Activated B cell treated with CpG ODN at 0.5 μM for 24 hours (primary cell): ENCODE measurements at regions of chr4 and their contacts with region 1.

Region 1: GRCh38 chr4:73258686-73259570 is at the start of gene ANKRD17:
- DNase-seq: peak; percentile 90
- ATAC-seq: peak; percentile 76
- H3K4me3 Mint-ChIP-seq: peak within 1 kb of the TSS; percentile 98
- H3K27ac Mint-ChIP-seq: peak within 1 kb of the TSS; percentile 99
- H3K4me1 Mint-ChIP-seq: peaks cover 64% of the 10 kb centered on the region
- H3K27me3 Mint-ChIP-seq: no peaks in the 10 kb centered on the region
- CTCF ChIP-seq: no peak
- total RNA-seq, gene ANKRD17: 54.1 and 61.4 TPM in 2 replicates

Region 2: DNA sequence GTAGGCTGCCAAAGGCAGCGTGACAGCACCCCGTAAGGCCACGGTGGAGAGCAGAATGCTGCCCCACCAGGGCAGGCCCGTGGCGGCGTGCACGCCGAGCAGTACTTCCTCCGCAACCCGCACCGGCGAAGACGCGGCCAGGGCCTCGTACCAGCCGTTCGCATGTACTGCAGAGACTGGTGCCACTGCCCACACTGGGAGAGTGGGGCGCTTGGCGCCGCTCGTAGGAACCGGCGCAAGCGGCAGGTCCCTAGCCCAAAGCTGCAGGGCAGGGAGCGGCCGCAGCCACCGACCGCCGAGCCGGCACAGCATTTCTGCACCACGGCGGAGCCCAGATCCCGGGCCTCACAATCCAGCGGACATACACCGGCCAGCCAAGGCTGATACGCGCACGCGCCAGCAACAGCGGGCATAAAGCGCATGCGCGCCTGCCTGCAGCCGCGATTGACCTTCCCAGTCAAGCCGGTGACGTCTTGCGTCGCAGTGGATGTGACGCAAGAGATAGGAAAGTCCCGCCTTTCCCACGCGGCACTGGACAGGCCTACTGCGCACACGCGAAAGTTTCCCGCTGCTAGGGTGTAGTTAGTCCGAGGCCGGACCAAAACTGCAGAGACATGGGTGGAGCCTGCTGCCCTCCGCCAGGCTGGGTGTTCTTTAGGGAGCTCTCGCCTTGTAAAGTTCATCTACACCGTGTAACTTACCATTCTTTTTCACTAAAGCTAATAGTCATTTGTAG is 189.4 kb before region 1 on chr4 and contains the start of gene COX18:
- CTCF ChIA-PET with region 1: interaction called, 3 read pairs
- POLR2A ChIA-PET with region 1: interaction called, 69 read pairs
- intact Hi-C with region 1: loop called (anchors 1 kb)
- DNase-seq: peak; percentile 96
- ATAC-seq: peak; percentile 80
- H3K4me3 Mint-ChIP-seq: peak within 1 kb of the TSS; percentile 89
- H3K27ac Mint-ChIP-seq: peak within 1 kb of the TSS; percentile 97
- H3K4me1 Mint-ChIP-seq: peaks cover 37% of the 10 kb centered on the region
- H3K27me3 Mint-ChIP-seq: no peaks in the 10 kb centered on the region
- CTCF ChIP-seq: no peak
- total RNA-seq, gene COX18: 12.2 and 13.5 TPM in 2 replicates

Region 3: GRCh38 chr4:73142995-73143547 is 115.9 kb before region 1 on chr4:
- CTCF ChIA-PET with region 1: interaction called, 3 read pairs
- POLR2A ChIA-PET with region 1: no interaction called
- intact Hi-C with region 1: loop called (anchors 5 kb)
- DNase-seq: no peak
- ATAC-seq: no peak
- H3K4me3 Mint-ChIP-seq: no peak overlapping the region
- H3K27ac Mint-ChIP-seq: no peak overlapping the region
- H3K4me1 Mint-ChIP-seq: no peaks in the 10 kb centered on the region
- H3K27me3 Mint-ChIP-seq: no peaks in the 10 kb centered on the region
- CTCF ChIP-seq: no peak

Region 4: GRCh38 chr4:73222466-73223257 is 36.3 kb before region 1 on chr4:
- CTCF ChIA-PET with region 1: interaction called, 4 read pairs
- POLR2A ChIA-PET with region 1: interaction called, 19 read pairs
- intact Hi-C with region 1: loop called (anchors 1 kb)
- DNase-seq: no peak
- ATAC-seq: peak; percentile 98
- H3K4me3 Mint-ChIP-seq: no peak overlapping the region
- H3K27ac Mint-ChIP-seq: no peak overlapping the region
- H3K4me1 Mint-ChIP-seq: peaks cover 37% of the 10 kb centered on the region
- H3K27me3 Mint-ChIP-seq: no peaks in the 10 kb centered on the region
- CTCF ChIP-seq: no peak

Region 5: GRCh38 chr4:73281396-73281795 is 22.5 kb after region 1 on chr4:
- CTCF ChIA-PET with region 1: no interaction called
- POLR2A ChIA-PET with region 1: no interaction called
- intact Hi-C with region 1: no loop called
- DNase-seq: no peak
- ATAC-seq: no peak
- H3K4me3 Mint-ChIP-seq: no peak overlapping the region
- H3K27ac Mint-ChIP-seq: no peak overlapping the region
- H3K4me1 Mint-ChIP-seq: no peaks in the 10 kb centered on the region
- H3K27me3 Mint-ChIP-seq: no peaks in the 10 kb centered on the region
- CTCF ChIP-seq: no peak

Region 6: GRCh38 chr4:73299548-73300280 is 40.8 kb after region 1 on chr4:
- CTCF ChIA-PET with region 1: no interaction called
- POLR2A ChIA-PET with region 1: no interaction called
- intact Hi-C with region 1: no loop called
- DNase-seq: no peak
- ATAC-seq: no peak
- H3K4me3 Mint-ChIP-seq: no peak overlapping the region
- H3K27ac Mint-ChIP-seq: no peak overlapping the region
- H3K4me1 Mint-ChIP-seq: no peaks in the 10 kb centered on the region
- H3K27me3 Mint-ChIP-seq: no peaks in the 10 kb centered on the region
- CTCF ChIP-seq: no peak

Region 7: DNA sequence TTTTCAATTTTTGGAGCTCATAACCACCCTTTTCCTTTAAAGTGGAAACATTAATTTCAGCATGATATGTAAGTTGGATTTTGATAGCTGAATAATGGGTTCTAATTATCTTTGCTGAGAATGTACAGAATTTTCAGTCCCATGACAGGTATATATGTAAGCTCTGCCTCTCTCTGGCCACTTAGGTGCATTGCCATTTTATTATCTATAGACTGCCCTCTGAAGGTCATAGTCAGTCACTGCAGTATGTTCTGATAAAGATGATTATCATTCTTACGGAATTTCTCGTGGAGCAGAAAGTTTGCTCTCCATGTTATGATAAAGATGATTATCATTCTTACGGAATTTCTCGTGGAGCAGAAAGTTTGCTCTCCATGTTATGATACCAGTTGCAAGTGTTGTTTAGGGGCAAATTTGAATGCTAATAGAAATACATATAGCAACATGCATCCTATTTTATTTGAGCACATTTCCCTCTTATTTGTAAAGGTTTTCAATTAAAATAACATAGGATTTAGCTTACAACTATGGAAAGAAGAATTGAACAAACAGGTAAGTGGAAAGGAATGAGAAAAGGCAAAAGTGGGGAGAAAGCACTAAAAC is 187.5 kb after region 1 on chr4:
- CTCF ChIA-PET with region 1: interaction called, 4 read pairs
- POLR2A ChIA-PET with region 1: no interaction called
- intact Hi-C with region 1: loop called (anchors 1 kb)
- DNase-seq: no peak
- ATAC-seq: peak; percentile 90
- H3K4me3 Mint-ChIP-seq: no peak overlapping the region
- H3K27ac Mint-ChIP-seq: no peak overlapping the region
- H3K4me1 Mint-ChIP-seq: no peaks in the 10 kb centered on the region
- H3K27me3 Mint-ChIP-seq: peaks cover 26% of the 10 kb centered on the region
- CTCF ChIP-seq: no peak

Region 8: DNA sequence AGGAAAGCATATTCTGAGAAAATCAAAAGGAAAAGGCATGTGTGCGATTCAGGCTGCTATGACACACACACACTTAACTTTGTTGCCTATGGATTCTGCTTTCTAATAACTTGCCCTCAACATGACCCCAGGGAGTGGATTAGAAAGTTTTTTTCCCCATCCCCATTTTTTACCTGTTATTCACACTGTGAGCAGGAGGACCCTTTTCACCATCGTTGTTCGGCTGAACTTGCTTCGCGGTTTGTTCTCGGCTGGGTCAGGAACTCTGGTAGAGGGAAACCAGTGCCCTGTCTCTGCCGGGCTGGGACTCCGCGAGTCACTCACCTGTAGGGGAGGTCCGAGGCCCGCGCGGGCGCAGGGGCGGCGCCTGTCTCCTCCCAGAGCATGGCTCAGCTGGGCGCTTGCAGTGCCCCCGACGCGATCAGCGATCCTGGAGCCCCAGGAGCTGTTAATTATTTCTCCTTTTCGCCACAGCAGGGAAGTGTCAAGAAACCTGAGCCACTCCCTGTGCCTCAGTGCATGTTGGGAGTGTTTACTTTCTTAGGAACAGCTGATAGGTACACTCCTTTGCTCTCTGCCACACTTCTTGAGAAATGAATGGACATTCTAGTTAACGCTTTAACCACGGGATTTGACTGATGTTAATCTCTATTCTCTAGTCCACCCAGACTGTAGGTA is 361.3 kb after region 1 on chr4 and contains the start of gene RASSF6:
- CTCF ChIA-PET with region 1: no interaction called
- POLR2A ChIA-PET with region 1: no interaction called
- intact Hi-C with region 1: no loop called
- DNase-seq: no peak
- ATAC-seq: peak; percentile 84
- H3K4me3 Mint-ChIP-seq: peak within 1 kb of the TSS; percentile 83
- H3K27ac Mint-ChIP-seq: no peak within 1 kb of the TSS
- H3K4me1 Mint-ChIP-seq: peaks cover 25% of the 10 kb centered on the region
- H3K27me3 Mint-ChIP-seq: peaks cover 6% of the 10 kb centered on the region
- CTCF ChIP-seq: no peak
- total RNA-seq, gene RASSF6: 4.0 TPM in 2 replicates

Region 9: GRCh38 chr4:73653695-73654106 is 394.8 kb after region 1 on chr4:
- CTCF ChIA-PET with region 1: no interaction called
- POLR2A ChIA-PET with region 1: no interaction called
- intact Hi-C with region 1: loop called (anchors 5 kb)
- DNase-seq: no peak
- ATAC-seq: peak; percentile 47
- H3K4me3 Mint-ChIP-seq: no peak overlapping the region
- H3K27ac Mint-ChIP-seq: no peak overlapping the region
- H3K4me1 Mint-ChIP-seq: no peaks in the 10 kb centered on the region
- H3K27me3 Mint-ChIP-seq: no peaks in the 10 kb centered on the region
- CTCF ChIP-seq: peak; percentile 52